ENCODE measurements at regions of chr11 and their contacts with region 1.

Region 1: DNA sequence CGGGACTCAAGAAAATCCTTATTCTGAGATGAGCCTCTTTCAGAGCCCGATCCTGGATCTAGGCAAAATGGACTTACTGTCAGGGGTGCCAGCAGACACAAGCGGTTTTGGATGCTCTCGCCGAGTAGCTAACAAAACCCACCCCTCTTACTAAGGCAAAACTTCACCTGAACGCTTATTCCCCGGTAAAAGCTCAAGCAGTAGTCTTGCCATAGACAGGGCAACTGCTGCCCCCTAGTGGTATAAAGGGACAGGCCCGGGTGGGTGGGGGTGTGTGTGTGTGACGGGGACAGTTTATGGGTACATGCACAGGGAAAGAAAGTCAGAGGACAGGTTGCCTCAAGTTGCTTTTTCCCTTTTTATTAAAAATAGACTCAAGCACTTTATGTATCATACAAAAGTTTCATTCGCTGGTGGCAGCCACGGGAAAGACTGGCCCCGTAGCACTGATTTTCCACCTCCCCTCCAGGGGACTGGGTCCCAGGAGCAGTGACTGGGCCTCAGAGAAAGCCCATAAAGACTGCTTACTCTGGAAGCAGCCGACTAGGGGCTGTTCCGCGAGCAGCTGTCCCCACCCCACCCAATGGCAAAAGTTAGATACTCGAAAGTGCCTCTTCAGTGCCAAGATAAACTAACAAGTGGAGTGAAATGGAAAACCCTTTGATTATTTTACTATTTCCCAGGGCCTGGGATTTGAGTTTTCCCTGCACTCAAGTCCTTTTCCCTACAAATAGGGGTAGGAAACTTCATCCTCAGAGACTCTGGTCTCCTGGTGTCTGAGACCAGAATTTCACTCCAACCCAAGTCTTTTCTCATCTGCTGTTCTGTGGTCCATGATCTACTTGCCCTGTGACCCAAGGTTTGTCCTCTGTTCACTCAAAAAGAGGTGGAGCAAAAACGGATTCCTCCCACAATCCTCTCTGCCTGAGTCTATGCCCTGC is 4.7 kb downstream of the YPEL4 start:
- DNase-seq: peak; percentile 86
- H3K4me3 ChIP-seq: no peak overlapping the region
- H3K27ac ChIP-seq: no peak overlapping the region
- H3K4me1 ChIP-seq: peaks cover 38% of the 10 kb centered on the region
- CTCF ChIP-seq: peak; percentile 97

Region 2: GRCh38 chr11:57345555-57346211 is 299.3 kb before region 1 on chr11:
- CTCF ChIA-PET with region 1: interaction called, 8 read pairs
- POLR2A ChIA-PET with region 1: no interaction called
- intact Hi-C with region 1: loop called (anchors 1 kb)
- DNase-seq: peak; percentile 77
- H3K4me3 ChIP-seq: no peak overlapping the region
- H3K27ac ChIP-seq: no peak overlapping the region
- H3K4me1 ChIP-seq: peaks cover 4% of the 10 kb centered on the region
- CTCF ChIP-seq: peak; percentile 84

Region 3: DNA sequence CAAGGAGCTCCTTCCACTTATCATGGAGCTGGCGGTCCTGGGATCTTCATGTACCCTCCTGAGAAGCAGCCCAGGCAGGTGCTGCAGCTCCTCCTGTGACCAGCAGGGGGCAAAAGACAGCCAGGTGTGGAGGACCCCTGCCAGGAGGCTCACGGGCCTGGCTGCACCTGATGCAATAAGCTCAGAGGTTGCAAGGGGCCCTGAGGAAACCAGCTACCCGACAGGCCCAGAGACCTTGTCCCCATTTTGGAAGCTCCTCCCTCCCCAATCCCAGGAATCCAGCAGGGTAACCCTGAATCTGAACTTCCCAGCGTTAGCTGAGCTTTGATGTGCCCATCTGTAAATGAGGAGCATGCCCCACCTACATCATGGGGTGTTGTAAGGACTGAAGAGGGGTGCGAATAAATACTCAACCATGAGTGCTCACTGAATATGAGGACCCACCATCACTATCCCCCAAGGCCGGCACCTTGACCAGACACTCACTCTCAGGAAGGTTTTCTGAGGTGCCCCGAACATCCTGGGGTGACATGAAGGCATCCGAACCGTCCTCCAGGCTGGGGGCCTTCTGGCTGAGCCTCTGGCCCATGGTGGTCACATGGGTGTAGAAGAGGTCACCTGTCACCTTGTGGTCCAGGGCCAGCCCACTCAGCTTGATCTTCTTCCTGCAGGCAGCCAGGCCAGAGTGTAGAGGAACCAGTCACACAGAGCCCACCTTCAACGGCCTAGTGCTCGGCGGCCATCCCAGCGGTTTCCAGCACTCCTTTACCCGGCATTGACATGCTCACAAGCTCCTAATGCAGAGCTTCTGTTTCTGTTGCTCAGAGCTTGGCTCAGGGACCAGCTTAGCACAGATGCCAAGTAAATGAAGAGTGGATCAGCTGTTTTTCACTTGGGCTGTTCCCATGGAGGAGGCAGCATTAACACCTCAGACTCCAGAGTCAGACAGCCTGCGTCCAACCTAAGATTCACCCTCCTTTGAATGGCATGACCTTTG is 151.2 kb before region 1 on chr11:
- CTCF ChIA-PET with region 1: interaction called, 14 read pairs
- POLR2A ChIA-PET with region 1: interaction called, 3 read pairs
- intact Hi-C with region 1: loop called (anchors 1 kb)
- DNase-seq: peak; percentile 91
- H3K4me3 ChIP-seq: no peak overlapping the region
- H3K27ac ChIP-seq: peak overlapping the region; percentile 75
- H3K4me1 ChIP-seq: peaks cover 16% of the 10 kb centered on the region
- CTCF ChIP-seq: peak; percentile 96

Region 4: DNA sequence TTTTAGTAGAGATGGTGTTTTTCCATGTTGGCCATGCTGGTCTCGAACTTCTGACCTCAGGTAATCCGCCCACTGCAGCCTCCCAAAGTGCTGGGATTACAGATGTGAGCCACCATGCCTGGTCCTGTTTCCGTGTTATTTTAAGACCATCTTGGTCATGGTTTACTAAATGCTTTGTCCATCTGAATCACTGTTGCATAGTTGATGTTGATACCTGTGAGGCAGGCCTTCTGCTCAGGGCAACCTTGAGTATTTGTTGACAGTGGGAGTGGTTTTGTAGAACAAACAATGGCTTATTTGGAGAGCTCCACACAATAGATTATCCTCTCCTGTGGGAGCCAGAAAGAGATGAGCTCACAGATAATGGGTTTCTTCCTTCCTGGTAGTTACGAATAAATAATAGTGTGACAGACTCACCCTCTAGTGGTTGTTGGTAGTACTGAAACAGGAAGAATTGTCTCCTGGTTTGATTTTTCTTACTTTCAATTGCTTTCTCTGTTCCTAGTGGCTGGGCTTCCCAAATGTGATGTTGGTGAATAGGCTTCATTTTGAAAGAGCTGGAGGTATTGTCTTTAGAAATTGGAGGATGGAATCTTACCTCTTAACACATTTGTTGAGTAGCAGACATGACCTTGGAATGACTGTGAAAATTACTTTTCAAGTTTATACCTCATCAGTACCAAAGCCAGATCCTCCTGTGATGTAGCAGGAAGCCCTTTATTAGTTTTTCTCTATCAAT is 155.6 kb after region 1 on chr11:
- CTCF ChIA-PET with region 1: interaction called, 4 read pairs
- POLR2A ChIA-PET with region 1: interaction called, 4 read pairs
- intact Hi-C with region 1: loop called (anchors 5 kb)
- DNase-seq: peak; percentile 74
- H3K4me3 ChIP-seq: no peak overlapping the region
- H3K27ac ChIP-seq: no peak overlapping the region
- H3K4me1 ChIP-seq: peaks cover 12% of the 10 kb centered on the region
- CTCF ChIP-seq: peak; percentile 94